ENCODE measurements at regions of chr16 and their contacts with region 1.

Region 1: DNA sequence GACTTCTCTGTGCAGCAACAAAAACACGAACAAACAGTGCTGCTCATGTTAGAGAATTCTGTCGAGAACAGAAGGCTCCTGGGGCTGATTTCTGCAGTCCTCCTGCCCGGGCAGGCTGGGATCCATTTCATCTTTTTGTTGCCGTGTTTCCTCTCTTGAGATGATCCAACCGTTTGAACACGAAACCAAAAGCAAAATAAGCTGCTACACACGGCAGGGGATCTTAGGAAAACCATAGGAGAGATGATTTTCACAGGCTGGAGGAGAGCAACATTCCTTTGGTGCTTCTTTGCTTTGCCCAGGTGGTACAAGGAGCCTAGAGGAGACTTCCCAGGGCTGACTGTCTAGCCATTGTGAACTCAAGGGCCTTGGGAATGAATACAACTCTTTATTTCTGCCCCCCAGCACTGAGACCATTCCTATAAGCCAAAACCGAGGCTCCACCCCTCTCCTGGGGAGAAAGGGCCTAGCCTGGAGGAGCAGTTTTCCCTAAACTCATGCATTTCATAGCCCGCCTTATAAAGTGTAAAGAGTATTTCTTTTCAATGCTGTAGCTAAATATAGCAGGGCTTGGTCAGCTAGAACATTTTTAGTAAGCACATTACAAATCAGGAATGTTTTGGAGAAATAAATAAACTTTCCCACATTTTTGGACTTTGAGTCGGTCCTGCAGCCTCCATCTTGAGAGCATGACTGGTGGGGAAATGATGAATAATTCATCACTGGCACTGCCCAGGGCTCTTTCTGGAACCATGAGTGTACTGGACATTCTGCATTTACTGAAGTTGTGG is 7.7 kb downstream of the FOXL1 start:
- DNase-seq: peak; percentile 55

Region 2: DNA sequence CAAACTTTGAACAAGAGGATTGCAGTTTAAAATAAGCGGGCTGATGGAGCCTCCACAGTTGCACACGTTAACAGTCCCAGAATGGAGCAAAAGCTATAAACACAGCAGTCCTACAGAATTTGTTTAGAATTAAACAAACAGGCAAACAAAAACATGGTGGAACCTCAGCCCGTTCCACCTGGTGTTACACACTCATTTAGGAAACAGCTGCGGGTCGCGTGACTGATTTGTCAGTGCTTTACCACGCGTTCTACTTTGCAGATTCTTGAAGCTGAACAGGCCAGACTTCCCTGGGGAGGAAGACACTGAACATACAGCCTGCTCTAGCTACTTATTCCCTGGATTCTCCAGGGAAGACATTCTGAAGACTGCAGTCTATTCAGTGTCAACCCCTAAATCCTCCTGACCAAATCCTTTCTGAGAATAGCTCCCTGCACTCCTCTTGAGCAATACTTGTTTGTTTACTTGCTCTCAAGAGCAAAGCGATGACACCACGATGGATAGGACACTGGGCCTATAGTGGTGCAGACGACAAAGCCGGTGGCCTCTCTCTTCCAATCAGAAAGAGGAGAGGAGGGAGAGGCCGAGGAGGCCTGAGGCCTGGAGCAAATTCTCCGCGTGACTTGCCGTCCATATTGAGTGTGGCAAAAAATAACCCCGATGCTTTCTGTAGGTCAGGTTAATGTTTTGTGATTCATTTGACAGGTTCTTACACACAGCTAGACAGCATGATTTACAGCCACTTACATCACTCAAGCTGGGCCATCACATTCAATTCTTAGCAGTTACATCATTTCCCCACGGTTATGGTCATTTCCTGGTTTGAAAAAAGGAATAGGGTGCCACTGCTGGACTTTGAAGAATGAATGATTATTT is 802.2 kb after region 1 on chr16:
- intact Hi-C with region 1: loop called in 1 of 2 experiments (anchors 10 kb)
- DNase-seq: peak; percentile 96